ENCODE measurements at regions of chr4 and their contacts with region 1.

Region 1: GRCh38 chr4:24488399-24489164 is 95.8 kb downstream of the DHX15 start:
- DNase-seq: peak; percentile 65 to 80
- ATAC-seq: peak; percentile 67 to 87 (median 80)
- H3K4me3 ChIP-seq: no peak overlapping the region
- H3K27ac ChIP-seq: no peak overlapping the region
- H3K4me1 ChIP-seq: peaks cover 0 to 11% (median 0%) of the 10 kb centered on the region in 9 donors
- H3K27me3 ChIP-seq: no peaks in the 10 kb centered on the region
- CTCF ChIP-seq: peak; percentile 76 to 87 (median 81)

Region 2: DNA sequence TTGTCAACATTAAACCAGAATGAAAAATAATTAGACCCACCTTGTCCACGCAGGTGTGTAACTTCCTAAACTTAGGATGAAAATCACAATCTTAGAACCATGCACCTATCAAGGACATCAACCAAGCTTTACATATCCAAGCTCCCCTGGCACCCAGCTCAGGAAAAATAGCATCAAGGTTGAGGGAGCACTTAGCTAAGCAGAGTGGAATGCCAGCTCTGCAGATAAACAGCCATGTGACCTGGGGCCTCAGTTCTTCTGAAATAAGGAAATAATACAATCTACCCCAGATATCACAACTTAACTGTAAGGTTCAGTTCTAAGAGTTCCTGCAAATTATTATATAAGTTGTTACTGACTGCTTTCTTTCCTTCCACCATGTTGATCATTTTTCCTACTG is 31.1 kb after region 1 on chr4:
- intact Hi-C with region 1: no loop called
- DNase-seq: peak in 1 of 2 donors; percentile 9
- ATAC-seq: peak in 6 of 8 donors; percentile 43 to 81 (median 78)
- H3K4me3 ChIP-seq: no peak overlapping the region
- H3K27ac ChIP-seq: peak overlapping the region in 3 of 10 donors; percentile 11 to 22 (median 18)
- H3K4me1 ChIP-seq: peaks cover 2 to 31% (median 22%) of the 10 kb centered on the region in 9 donors
- H3K27me3 ChIP-seq: no peaks in the 10 kb centered on the region
- CTCF ChIP-seq: no peak

Region 3: DNA sequence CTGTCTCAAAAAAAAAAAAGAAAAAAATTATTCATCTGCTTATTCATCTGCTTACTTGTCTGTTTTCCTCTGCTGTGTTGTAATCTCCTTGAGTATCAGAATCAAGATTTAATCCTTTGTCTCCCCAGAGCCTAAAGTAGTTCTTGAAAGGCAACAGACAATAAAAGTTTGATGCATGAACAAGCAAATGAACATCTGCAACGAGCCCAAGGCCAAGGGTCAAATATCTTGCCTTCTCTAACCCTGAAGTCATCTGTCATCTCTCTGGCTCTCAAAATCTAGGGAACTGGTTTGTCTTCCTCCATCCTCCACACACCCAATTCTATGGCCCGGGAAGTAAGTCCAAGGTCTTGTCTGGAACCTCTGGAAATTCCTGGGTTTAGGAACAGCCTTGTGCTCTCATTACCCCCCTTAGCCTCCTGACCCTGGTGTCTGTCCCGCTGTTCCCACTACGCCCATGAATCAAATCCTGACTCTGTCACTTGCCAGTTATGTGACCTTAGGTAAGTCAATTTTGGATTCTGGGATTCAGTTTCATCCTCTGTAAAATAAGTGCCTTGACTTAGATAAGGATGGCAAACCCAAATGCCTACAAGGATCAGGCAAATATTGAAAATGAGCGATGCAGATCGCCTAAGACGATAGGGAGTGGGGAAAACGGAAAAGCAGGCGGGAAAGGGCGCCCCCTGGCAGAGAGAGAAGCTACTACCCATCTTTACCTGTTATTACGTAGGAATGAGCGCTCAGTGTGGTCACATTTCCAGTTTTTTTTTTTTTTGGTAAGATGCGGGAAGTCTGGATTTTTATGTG is 198.5 kb after region 1 on chr4:
- intact Hi-C with region 1: loop called in 7 of 10 experiments (anchors 1 to 10 kb)
- DNase-seq: peak in 1 of 2 donors; percentile 30
- ATAC-seq: peak in 2 of 8 donors; percentile 42 to 51
- H3K4me3 ChIP-seq: no peak overlapping the region
- H3K27ac ChIP-seq: no peak overlapping the region
- H3K4me1 ChIP-seq: peaks cover 0 to 8% (median 0%) of the 10 kb centered on the region in 9 donors
- H3K27me3 ChIP-seq: no peaks in the 10 kb centered on the region
- CTCF ChIP-seq: peak; percentile 21 to 60 (median 52)

Region 4: DNA sequence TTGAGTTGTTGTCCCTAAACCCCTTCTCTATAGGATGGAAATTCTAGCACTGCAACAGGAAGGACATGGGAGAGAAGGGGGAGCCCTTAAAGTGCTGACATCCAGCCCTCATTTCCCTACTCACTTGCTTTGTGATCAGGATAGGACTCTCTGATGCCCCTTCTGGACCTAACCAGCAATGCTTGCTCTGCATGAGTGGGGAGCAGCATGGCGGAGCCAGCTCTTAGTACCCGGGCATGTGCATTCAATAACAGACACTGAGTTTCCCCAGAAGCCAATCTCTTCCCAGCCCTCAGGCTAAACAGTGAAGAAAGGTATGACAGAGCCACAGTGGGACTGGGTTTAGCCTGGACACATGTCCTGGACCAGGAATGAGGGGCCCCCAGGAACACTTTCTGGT is 320.8 kb after region 1 on chr4:
- intact Hi-C with region 1: loop called in 1 of 10 experiments (anchors 10 kb)
- DNase-seq: no peak
- ATAC-seq: peak in 3 of 8 donors; percentile 22 to 39 (median 26)
- H3K4me3 ChIP-seq: no peak overlapping the region
- H3K27ac ChIP-seq: no peak overlapping the region
- H3K4me1 ChIP-seq: peaks cover 0 to 10% (median 0%) of the 10 kb centered on the region in 9 donors
- H3K27me3 ChIP-seq: no peaks in the 10 kb centered on the region
- CTCF ChIP-seq: peak in 2 of 9 donors; percentile 9 to 11

Region 5: DNA sequence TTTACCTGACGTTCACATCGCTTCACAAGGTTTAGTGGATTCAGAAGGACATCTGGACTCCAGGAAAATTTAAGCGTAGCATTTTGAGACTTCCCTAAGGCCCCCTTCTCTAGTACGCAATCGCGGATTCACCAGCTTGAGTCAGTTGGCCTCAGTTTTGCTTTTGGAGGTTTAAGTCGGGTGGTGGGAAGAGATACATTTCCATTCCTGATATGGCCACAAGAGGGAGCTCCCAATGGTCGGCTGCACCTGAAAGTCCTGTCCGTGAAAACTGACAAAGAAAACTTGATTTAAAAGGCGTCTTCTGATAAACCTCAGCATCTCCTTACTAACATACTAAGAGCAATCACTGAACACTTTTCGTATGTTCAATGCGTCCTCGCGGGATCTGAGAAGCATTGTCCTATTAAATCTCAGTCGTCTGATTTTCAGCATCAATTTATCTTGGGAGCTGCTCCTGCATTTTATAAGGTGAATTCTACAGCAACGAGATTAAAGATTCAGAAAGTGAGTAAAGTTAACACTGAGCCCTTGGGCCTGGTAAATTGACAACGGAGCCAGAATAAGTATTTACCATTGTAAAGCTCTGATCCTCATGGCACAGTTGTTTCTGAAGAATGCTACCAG is 491.6 kb after region 1 on chr4:
- intact Hi-C with region 1: loop called in 2 of 10 experiments (anchors 10 kb)
- DNase-seq: peak in 1 of 2 donors; percentile 78
- ATAC-seq: peak; percentile 55 to 87 (median 66)
- H3K4me3 ChIP-seq: peak overlapping the region in 7 of 10 donors; percentile 21 to 47 (median 39)
- H3K27ac ChIP-seq: peak overlapping the region; percentile 73 to 95 (median 88)
- H3K4me1 ChIP-seq: peaks cover 3 to 41% (median 27%) of the 10 kb centered on the region in 9 donors
- H3K27me3 ChIP-seq: no peaks in the 10 kb centered on the region
- CTCF ChIP-seq: peak; percentile 83 to 94 (median 88)

Region 6: GRCh38 chr4:25051534-25051933 is 563.0 kb after region 1 on chr4:
- intact Hi-C with region 1: no loop called
- DNase-seq: no peak
- ATAC-seq: no peak
- H3K4me3 ChIP-seq: no peak overlapping the region
- H3K27ac ChIP-seq: no peak overlapping the region
- H3K4me1 ChIP-seq: no peaks in the 10 kb centered on the region
- H3K27me3 ChIP-seq: no peaks in the 10 kb centered on the region
- CTCF ChIP-seq: no peak

Region 7: DNA sequence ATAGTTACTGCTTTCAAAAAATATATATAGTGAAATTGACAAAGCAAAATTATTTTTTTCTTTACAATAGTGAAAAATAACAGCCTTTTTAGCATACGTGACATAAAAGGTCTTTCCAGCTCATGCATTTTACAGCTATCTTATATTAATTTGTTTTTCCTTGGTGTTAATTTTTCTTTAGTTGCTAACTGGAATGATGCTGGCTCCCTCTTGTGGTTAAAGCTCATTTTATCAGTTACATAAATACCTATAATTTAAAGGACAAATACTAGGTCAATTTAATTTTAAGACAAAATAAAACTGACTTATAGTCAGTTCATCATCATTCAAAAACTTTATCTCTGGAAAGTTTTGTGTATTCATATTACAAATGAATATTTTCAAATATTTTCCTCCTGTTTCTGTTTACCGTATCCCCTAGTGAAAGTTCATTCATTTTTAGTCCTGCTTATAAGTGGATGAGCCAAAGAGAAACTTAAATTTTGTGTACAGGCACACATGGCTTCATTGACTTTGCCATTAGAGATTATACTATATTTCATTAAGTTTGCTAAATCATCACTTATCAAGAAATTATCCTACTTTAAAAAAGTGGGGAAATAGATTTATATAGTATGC is 878.5 kb after region 1 on chr4:
- intact Hi-C with region 1: loop called in 1 of 10 experiments (anchors 5 kb)
- DNase-seq: no peak
- ATAC-seq: no peak
- H3K4me3 ChIP-seq: no peak overlapping the region
- H3K27ac ChIP-seq: no peak overlapping the region
- H3K4me1 ChIP-seq: no peaks in the 10 kb centered on the region
- H3K27me3 ChIP-seq: no peaks in the 10 kb centered on the region
- CTCF ChIP-seq: peak; percentile 34 to 74 (median 67)

Measured in heart right ventricle (tissue), 16 donors.